ENCODE measurements at regions of chr6 and their contacts with region 1.

Region 1: DNA sequence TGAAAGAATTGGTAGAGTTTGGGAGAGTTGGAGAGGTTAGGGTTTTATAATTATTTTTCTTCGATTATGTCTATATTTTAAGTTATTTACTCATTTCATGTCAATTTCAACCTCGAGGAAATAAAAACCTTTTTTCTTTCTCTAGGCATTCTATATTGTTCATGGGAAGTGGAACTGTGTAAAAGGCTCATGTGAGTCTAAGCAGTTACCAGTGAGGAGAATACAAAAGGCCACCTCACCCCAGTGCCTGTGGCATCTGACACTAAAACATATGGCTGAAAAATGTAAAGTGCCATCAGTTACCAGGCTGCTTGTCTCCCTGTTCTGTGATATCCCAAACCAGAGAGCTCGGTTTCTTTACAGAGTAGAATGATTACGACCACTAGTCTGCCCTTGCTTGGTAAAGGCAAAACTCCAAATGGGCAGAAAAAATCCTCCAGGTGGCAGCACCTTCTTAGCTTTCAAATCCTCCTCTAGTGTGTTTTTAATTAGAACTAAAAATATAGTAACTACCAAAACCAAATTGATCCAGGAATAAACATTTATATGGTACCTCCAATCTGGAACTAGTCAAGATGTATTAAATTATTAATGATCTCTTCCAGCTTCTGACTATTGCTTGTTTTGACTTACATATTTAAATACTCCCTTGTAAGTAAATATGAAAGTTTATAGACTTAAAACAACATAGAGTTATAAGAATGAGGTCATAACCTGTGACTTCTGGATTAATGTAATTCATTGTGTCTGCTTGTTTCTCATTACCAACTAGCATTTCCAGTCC is 122.6 kb upstream of the MCHR2 start:
- DNase-seq: peak; percentile 44
- H3K4me3 ChIP-seq: no peak overlapping the region
- H3K27ac ChIP-seq: no peak overlapping the region
- H3K4me1 ChIP-seq: no peaks in the 10 kb centered on the region
- CTCF ChIP-seq: peak; percentile 84

Region 2: GRCh38 chr6:100304575-100304974 is 188.0 kb after region 1 on chr6:
- CTCF ChIA-PET with region 1: no interaction called
- POLR2A ChIA-PET with region 1: no interaction called
- intact Hi-C with region 1: no loop called
- DNase-seq: no peak
- H3K4me3 ChIP-seq: no peak overlapping the region
- H3K27ac ChIP-seq: no peak overlapping the region
- H3K4me1 ChIP-seq: no peaks in the 10 kb centered on the region
- CTCF ChIP-seq: no peak

Region 3: DNA sequence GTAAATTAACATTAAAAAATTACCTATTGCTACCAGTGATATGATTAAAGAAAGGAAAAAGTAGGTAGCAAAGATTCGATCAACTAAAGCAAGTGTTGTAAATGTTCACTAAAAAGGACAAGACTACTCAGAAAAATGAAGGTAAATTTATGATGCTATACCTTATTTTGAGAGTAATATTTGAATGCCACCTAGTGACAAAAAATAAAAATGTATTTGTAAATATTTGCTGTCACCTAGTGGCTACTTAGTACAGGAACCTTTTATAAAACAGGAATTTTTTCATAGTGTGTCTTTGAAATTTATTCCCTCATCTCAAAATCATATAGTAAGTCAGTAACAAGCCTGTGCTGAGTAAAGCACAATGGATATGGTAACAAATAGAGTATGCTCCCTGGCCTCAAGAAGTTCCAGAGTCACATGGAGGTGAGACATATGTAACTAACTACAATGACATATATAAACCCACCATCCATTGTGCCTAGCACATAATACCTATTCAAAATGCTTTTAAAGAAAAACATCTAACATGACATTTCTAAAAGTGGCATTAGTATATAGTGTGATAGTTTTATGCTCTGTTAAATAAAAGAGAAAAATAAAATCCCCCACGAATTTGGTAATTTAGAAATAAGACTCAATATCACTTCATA is 541.2 kb after region 1 on chr6:
- CTCF ChIA-PET with region 1: no interaction called
- POLR2A ChIA-PET with region 1: interaction called, 3 read pairs
- intact Hi-C with region 1: loop called (anchors 5 kb)
- DNase-seq: peak; percentile 31
- H3K4me3 ChIP-seq: no peak overlapping the region
- H3K27ac ChIP-seq: no peak overlapping the region
- H3K4me1 ChIP-seq: no peaks in the 10 kb centered on the region
- CTCF ChIP-seq: peak; percentile 90

Measured in OCI-LY7 (cell line).